ENCODE measurements at regions of chr7 and their contacts with region 1.

Region 1: DNA sequence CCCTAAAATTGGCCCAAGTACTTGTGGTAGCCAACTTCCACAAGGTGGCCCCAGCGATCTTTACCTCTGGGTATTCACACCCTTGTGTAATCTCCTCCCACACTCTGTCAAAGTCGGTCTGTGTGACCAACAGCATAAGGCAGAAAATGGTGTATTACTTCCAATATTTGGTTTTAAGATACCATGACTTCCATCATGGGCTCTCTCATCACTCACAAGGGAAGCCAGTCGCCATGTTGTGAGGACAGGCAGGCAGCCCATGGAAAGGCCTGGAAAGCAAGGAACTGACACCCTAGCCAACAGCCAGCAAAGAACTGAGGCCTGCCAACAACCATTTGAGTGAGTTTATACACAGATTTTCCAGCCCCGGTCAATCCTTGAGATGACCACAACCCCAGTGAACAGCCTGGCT is 91.0 kb upstream of the KMT2E start:
- DNase-seq: peak; percentile 53 to 88
- ATAC-seq: peak; percentile 90 to 98 (median 98)
- H3K4me3 ChIP-seq: no peak overlapping the region
- H3K4me3 Mint-ChIP-seq: no peak overlapping the region
- H3K27ac ChIP-seq: no peak overlapping the region
- H3K27ac Mint-ChIP-seq: peak overlapping the region in 1 of 2 donors; percentile 71
- H3K4me1 ChIP-seq: peaks cover 4% of the 10 kb centered on the region
- H3K4me1 Mint-ChIP-seq: no peaks in the 10 kb centered on the region
- H3K27me3 ChIP-seq: no peaks in the 10 kb centered on the region
- H3K27me3 Mint-ChIP-seq: no peaks in the 10 kb centered on the region
- CTCF ChIP-seq: peak; percentile 77

Region 2: GRCh38 chr7:103773726-103774125 is 1149.3 kb before region 1 on chr7:
- intact Hi-C with region 1: no loop called
- DNase-seq: no peak
- ATAC-seq: no peak
- H3K4me3 ChIP-seq: no peak overlapping the region
- H3K4me3 Mint-ChIP-seq: no peak overlapping the region
- H3K27ac ChIP-seq: no peak overlapping the region
- H3K27ac Mint-ChIP-seq: no peak overlapping the region
- H3K4me1 ChIP-seq: no peaks in the 10 kb centered on the region
- H3K4me1 Mint-ChIP-seq: no peaks in the 10 kb centered on the region
- H3K27me3 ChIP-seq: no peaks in the 10 kb centered on the region
- H3K27me3 Mint-ChIP-seq: no peaks in the 10 kb centered on the region
- CTCF ChIP-seq: no peak

Region 3: GRCh38 chr7:104883718-104884452 is 39.1 kb before region 1 on chr7:
- intact Hi-C with region 1: loop called (anchors 1 kb)
- DNase-seq: peak; percentile 72 to 86
- ATAC-seq: peak; percentile 80 to 95 (median 94)
- H3K4me3 ChIP-seq: no peak overlapping the region
- H3K4me3 Mint-ChIP-seq: no peak overlapping the region
- H3K27ac ChIP-seq: no peak overlapping the region
- H3K27ac Mint-ChIP-seq: no peak overlapping the region
- H3K4me1 ChIP-seq: peaks cover 4% of the 10 kb centered on the region
- H3K4me1 Mint-ChIP-seq: peaks cover 7 to 9% of the 10 kb centered on the region in 2 donors
- H3K27me3 ChIP-seq: no peaks in the 10 kb centered on the region
- H3K27me3 Mint-ChIP-seq: peaks cover 8 to 11% of the 10 kb centered on the region in 2 donors
- CTCF ChIP-seq: peak; percentile 91

Region 4: GRCh38 chr7:104900525-104901239 is 22.3 kb before region 1 on chr7:
- intact Hi-C with region 1: no loop called
- DNase-seq: no peak
- ATAC-seq: no peak
- H3K4me3 ChIP-seq: no peak overlapping the region
- H3K4me3 Mint-ChIP-seq: no peak overlapping the region
- H3K27ac ChIP-seq: no peak overlapping the region
- H3K27ac Mint-ChIP-seq: no peak overlapping the region
- H3K4me1 ChIP-seq: no peaks in the 10 kb centered on the region
- H3K4me1 Mint-ChIP-seq: peaks cover 6 to 7% of the 10 kb centered on the region in 2 donors
- H3K27me3 ChIP-seq: no peaks in the 10 kb centered on the region
- H3K27me3 Mint-ChIP-seq: peaks cover 0 to 3% of the 10 kb centered on the region in 2 donors
- CTCF ChIP-seq: no peak

Region 5: GRCh38 chr7:105429746-105430612 is 507.0 kb after region 1 on chr7:
- intact Hi-C with region 1: loop called (anchors 1 kb)
- DNase-seq: peak; percentile 19 to 79
- ATAC-seq: peak; percentile 44 to 75 (median 58)
- H3K4me3 ChIP-seq: no peak overlapping the region
- H3K4me3 Mint-ChIP-seq: no peak overlapping the region
- H3K27ac ChIP-seq: no peak overlapping the region
- H3K27ac Mint-ChIP-seq: no peak overlapping the region
- H3K4me1 ChIP-seq: no peaks in the 10 kb centered on the region
- H3K4me1 Mint-ChIP-seq: no peaks in the 10 kb centered on the region
- H3K27me3 ChIP-seq: no peaks in the 10 kb centered on the region
- H3K27me3 Mint-ChIP-seq: no peaks in the 10 kb centered on the region
- CTCF ChIP-seq: peak; percentile 57

Measured in natural killer cell (primary cell).